Esophagus muscularis mucosa (tissue), 4 donors: ENCODE measurements at regions of chr6 and their contacts with region 1.

Region 1: DNA sequence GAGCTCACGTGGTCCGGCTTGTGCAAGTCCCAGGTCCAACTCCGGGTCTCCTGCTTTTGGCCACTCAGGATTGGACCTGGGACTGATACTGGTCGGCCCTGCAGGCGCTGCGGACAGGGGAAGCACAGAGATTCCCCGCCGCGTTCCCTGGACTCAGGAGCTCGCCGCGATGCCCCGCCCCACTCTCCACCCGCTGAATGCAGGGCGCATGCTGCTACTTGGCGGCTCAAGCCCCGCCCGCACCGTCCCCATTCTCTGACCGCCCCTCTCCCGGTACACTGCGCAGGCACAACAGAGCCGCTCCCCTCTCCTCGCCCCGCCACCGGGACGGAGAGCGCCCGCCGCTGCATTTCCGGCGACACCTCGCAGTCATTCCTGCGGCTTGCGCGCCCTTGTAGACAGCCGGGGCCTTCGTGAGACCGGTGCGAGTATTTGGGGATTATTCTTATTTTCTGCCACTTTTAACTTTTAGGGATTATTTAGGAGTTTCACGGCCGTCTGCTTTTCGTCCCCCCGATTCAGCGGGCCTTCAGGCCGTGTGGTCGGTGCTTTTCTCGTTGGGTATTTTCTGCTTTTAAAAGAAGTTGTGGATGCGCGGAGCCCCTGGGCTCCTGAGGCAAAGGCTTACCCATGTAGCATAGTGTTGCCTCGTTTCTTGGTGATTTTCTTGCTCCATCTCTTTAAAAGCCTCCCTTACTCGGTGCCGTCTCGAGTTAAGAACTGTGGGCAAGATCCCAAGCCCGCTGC is at the start of gene TMEM14C:
- DNase-seq: peak; percentile 99
- H3K4me3 ChIP-seq: peak within 1 kb of the TSS; percentile 68 to 74 (median 70)
- H3K27ac ChIP-seq: peak within 1 kb of the TSS; percentile 84 to 92 (median 86)
- H3K4me1 ChIP-seq: peaks cover 35 to 60% (median 46%) of the 10 kb centered on the region in 4 donors
- H3K27me3 ChIP-seq: no peaks in the 10 kb centered on the region
- CTCF ChIP-seq: peak in 2 of 3 experiments; percentile 5 to 21
- EP300 ChIP-seq: no peak
- POLR2A ChIP-seq: peak; percentile 57
- total RNA-seq, gene TMEM14C: 91.1 to 147 (median 140) TPM

Region 2: DNA sequence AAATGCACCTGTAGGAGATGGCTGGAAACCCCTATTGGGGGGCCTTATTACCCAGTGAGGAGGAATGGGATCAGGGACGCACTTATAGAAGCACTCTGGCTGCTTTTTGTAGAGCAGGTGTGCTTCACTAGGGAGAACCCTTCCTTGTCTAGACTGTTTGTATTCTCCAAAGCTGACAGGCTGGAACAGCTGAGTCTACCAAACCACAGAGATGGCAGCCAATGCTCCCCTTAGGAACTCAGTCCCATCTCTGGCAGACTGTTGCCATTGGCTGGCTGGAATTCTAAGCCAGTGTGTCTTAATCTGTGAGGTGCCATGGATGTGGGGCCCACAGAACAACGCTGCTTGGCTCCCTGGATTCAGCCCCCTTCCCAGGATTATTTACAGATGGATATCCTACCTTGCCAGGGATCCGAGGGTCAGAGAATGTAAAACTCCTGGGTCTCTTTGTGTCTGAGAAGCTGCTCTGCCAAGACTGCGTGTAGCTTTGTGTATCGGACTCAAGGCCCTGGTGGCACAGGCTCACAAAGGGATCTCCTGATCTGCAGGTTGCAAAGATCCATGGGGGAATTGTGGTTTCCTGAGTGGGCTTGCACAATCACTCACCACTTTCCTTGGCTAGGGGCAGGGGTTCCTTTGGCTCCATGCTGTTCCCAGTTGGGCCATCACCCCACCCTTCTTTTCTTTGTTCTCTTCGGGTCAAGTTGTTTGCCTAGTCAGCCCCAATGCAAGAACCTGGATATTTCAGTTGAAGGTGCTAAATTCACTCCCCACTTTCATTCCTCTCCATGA is 54.7 kb before region 1 on chr6:
- intact Hi-C with region 1: no loop called
- DNase-seq: no peak
- H3K4me3 ChIP-seq: no peak overlapping the region
- H3K27ac ChIP-seq: no peak overlapping the region
- H3K4me1 ChIP-seq: no peaks in the 10 kb centered on the region
- H3K27me3 ChIP-seq: no peaks in the 10 kb centered on the region
- CTCF ChIP-seq: no peak
- EP300 ChIP-seq: no peak
- POLR2A ChIP-seq: no peak

Region 3: GRCh38 chr6:10694302-10695085 is 28.5 kb before region 1 on chr6 and contains the starts of genes C6orf52 and PAK1IP1:
- intact Hi-C with region 1: no loop called
- DNase-seq: peak; percentile 97
- H3K4me3 ChIP-seq: peak within 1 kb of the TSS; percentile 64 to 93 (median 86)
- H3K27ac ChIP-seq: peak within 1 kb of the TSS; percentile 89 to 93 (median 90)
- H3K4me1 ChIP-seq: peaks cover 25 to 36% (median 28%) of the 10 kb centered on the region in 4 donors
- H3K27me3 ChIP-seq: no peaks in the 10 kb centered on the region
- CTCF ChIP-seq: peak in 1 of 3 experiments; percentile 6
- EP300 ChIP-seq: peak; percentile 8
- POLR2A ChIP-seq: peak; percentile 83
- total RNA-seq, gene C6orf52: 0.71 to 1.2 TPM in 2 of 4 donors, not detected in the others
- total RNA-seq, gene PAK1IP1: 9.4 to 17.9 (median 11.4) TPM

Region 4: GRCh38 chr6:10747251-10747972 is 24.4 kb after region 1 on chr6 and contains the start of gene TMEM14B:
- intact Hi-C with region 1: loop called (anchors 2 kb)
- DNase-seq: peak; percentile 100
- H3K4me3 ChIP-seq: peak within 1 kb of the TSS; percentile 69 to 86 (median 70)
- H3K27ac ChIP-seq: peak within 1 kb of the TSS; percentile 81 to 88 (median 83)
- H3K4me1 ChIP-seq: peaks cover 29 to 41% (median 34%) of the 10 kb centered on the region in 4 donors
- H3K27me3 ChIP-seq: no peaks in the 10 kb centered on the region
- CTCF ChIP-seq: no peak
- EP300 ChIP-seq: no peak
- POLR2A ChIP-seq: peak; percentile 52
- total RNA-seq, gene TMEM14B: 35.4 to 77.2 (median 66.2) TPM